GM10248 (cell line): ENCODE measurements at regions of chr7 and their contacts with region 1.

Region 1: DNA sequence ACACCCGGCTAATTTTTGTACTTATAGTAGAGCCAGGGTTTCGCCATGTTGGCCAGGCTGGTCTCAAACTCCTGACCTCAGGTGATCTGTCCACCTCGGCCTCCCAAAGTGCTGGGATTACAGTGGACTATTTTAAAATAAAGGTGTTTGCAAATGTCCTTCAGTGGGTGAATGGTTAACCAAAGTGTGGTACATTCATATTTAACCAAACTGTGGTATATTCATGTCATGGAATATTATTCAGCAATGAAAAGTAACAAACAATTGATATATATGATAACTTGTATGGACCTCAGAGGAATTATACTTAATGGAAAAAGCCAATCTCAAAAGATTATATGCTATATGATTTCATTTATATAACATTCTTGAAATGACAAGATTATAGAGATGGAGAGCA is 190.0 kb downstream of the CREB5 start:
- DNase-seq: no peak
- CTCF ChIP-seq: no peak

Region 2: DNA sequence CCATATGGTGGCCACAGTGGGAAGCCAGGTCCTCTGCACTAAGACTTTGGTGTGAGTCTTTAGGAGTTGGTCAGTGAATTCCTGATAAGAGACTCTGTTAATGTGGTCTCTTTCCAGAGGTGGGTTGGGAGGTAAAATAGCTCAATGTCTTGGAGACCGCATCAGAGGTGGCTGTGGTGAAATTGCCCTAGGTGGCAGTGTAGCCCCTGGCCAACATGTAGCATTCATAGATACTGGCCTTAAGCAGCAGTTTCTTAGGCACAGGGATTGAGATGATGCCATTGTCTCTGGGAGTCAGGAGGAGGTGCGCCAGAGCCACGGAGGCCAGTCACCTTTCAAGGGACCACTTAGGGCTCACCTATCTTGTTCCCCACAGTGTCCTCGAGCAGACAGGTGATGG is 12.8 kb after region 1 on chr7:
- CTCF ChIA-PET with region 1: interaction called, 20 read pairs
- POLR2A ChIA-PET with region 1: no interaction called
- DNase-seq: no peak
- CTCF ChIP-seq: peak; percentile 33

Region 3: GRCh38 chr7:28674359-28674782 is 72.1 kb after region 1 on chr7:
- CTCF ChIA-PET with region 1: no interaction called
- POLR2A ChIA-PET with region 1: no interaction called
- DNase-seq: no peak
- CTCF ChIP-seq: no peak

Region 4: DNA sequence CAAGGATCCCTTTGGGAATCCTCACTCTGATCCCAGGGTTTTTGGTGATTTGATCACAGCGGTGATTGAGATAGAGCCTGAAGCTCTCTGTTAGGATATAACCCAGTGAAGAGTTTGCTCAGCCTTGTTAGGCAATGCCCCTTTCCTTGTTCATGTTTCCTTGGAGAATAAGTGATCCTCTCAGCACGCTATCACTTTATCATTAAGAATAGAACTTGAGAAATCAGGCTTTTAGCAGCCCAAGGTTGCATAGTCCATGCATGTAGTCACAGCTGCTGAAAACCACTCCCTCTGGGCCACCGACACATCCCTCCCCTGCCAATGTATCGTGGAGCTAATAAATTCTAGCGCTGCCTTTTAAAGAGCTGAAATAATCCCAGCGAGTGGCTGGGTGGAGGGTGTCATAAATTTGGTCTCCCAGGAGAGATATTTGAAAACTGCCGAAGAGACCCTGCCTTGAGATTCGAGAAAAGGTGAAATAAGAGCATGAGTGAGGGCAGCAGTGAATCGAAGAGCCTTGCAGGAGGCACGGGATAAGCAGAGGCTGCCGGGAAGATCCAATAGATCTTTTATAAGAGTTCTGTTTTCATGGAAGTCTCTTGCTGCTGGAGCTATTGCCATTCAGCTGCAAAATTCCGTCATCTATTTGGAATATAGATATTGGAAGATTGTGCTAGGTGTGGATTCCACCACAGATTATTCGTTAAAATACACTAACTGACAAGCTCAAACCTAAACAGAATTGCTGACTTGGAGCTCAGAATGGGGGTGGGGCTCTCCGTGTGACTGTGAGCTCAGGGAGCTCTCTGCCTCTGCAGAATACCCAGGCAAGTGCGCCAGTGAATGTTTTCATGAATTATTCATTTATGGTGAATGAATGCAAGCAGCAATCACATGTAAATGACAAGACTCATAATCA is 106.0 kb after region 1 on chr7:
- CTCF ChIA-PET with region 1: no interaction called
- POLR2A ChIA-PET with region 1: no interaction called
- DNase-seq: no peak
- CTCF ChIP-seq: no peak